Prostate gland (tissue), 2 donors: ENCODE measurements at regions of chr5 and their contacts with region 1.

Region 1: DNA sequence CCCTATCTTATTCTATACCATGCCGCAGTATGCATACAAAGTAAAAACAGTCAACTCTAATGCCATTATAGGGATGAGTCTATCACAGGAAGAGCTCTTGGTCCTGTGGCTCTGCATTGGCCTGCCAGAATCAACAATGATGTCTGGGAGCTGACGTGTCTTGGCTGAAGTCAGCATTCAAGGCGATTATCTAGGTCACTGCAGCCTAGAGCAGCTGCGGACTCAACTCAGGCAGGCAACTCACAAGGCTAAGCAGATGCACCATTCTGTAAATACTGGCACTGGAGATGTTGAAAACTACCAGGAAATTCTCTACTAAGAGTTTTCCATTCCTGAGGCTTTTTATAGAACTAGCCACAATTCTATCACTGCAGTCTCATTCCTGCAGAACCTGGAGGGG is 13.3 kb downstream of the SPATA9 start:
- DNase-seq: peak; percentile 7
- H3K4me3 ChIP-seq: no peak overlapping the region
- H3K27ac ChIP-seq: peak overlapping the region; percentile 45 to 46
- H3K4me1 ChIP-seq: no peaks in the 10 kb centered on the region
- H3K27me3 ChIP-seq: no peaks in the 10 kb centered on the region
- CTCF ChIP-seq: no peak
- POLR2A ChIP-seq: no peak

Region 2: GRCh38 chr5:95543017-95543705 is 126.4 kb before region 1 on chr5:
- intact Hi-C with region 1: no loop called
- DNase-seq: peak; percentile 15
- H3K4me3 ChIP-seq: no peak overlapping the region
- H3K27ac ChIP-seq: peak overlapping the region; percentile 42 to 66
- H3K4me1 ChIP-seq: no peaks in the 10 kb centered on the region
- H3K27me3 ChIP-seq: no peaks in the 10 kb centered on the region
- CTCF ChIP-seq: no peak
- POLR2A ChIP-seq: no peak

Region 3: GRCh38 chr5:95565280-95565920 is 104.1 kb before region 1 on chr5:
- intact Hi-C with region 1: no loop called
- DNase-seq: no peak
- H3K4me3 ChIP-seq: no peak overlapping the region
- H3K27ac ChIP-seq: no peak overlapping the region
- H3K4me1 ChIP-seq: no peaks in the 10 kb centered on the region
- H3K27me3 ChIP-seq: no peaks in the 10 kb centered on the region
- CTCF ChIP-seq: no peak
- POLR2A ChIP-seq: no peak

Region 4: DNA sequence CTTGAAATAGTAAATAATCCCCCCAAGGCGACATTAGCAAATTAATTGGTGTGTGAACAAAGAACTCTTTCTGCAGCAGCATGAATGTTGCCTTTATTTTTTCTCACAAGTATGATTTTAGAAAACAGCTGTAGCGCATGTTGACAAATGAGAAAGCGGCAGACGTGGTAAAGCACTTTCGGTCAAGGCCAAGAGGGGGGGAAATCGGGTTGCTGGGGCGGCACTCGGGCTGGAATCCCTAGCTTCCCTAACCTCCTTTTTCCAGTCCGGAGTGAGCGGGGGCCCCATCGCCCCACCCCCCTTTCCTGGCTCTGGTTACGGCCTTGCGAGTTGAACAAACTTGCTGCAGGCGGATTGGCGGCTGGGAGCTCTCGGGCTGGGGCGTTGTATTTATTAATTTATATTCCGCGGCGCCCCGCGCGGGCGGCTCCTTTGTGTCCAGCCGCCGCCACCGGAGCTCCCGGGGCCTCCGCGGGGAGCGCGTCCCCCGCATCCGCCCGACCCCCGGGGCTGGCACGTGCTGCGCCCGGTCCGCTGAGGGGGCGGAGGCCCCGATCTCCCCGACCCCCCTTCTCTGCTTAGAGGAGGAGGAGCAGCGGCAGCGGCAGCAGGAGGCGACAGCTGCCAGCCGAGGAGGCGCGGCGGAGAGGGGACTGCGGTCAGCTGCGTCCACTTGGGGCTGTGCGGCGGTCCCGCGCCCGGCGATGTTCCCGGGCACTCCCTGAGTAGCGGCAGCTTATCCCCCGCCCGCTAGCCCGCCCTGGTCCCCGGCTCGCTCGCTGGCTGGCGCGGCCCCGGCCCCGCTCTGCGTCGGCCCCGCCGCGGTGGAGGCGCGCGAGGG is 61.4 kb after region 1 on chr5 and contains the start of gene RHOBTB3:
- intact Hi-C with region 1: loop called (anchors 5 kb)
- DNase-seq: peak; percentile 88
- H3K4me3 ChIP-seq: peak within 1 kb of the TSS; percentile 86 to 91
- H3K27ac ChIP-seq: peak within 1 kb of the TSS; percentile 95 to 97
- H3K4me1 ChIP-seq: peaks cover 3% of the 10 kb centered on the region
- H3K27me3 ChIP-seq: no peaks in the 10 kb centered on the region
- CTCF ChIP-seq: peak in 1 of 4 experiments; percentile 14
- POLR2A ChIP-seq: peak; percentile 67
- total RNA-seq, gene RHOBTB3: 87.3 to 134 TPM

Region 5: GRCh38 chr5:95746722-95747679 is 77.5 kb after region 1 on chr5:
- intact Hi-C with region 1: no loop called
- DNase-seq: no peak
- H3K4me3 ChIP-seq: no peak overlapping the region
- H3K27ac ChIP-seq: peak overlapping the region; percentile 62 to 74
- H3K4me1 ChIP-seq: no peaks in the 10 kb centered on the region
- H3K27me3 ChIP-seq: no peaks in the 10 kb centered on the region
- CTCF ChIP-seq: no peak
- POLR2A ChIP-seq: no peak

Region 6: GRCh38 chr5:95846554-95847260 is 177.2 kb after region 1 on chr5:
- intact Hi-C with region 1: loop called (anchors 5 kb)
- DNase-seq: peak; percentile 66
- H3K4me3 ChIP-seq: no peak overlapping the region
- H3K27ac ChIP-seq: peak overlapping the region; percentile 22 to 33
- H3K4me1 ChIP-seq: peaks cover 5% of the 10 kb centered on the region
- H3K27me3 ChIP-seq: no peaks in the 10 kb centered on the region
- CTCF ChIP-seq: peak; percentile 83 to 98 (median 94)
- POLR2A ChIP-seq: no peak